PC-9 (cell line): ENCODE measurements at regions of chr14 and their contacts with region 1.

Region 1: DNA sequence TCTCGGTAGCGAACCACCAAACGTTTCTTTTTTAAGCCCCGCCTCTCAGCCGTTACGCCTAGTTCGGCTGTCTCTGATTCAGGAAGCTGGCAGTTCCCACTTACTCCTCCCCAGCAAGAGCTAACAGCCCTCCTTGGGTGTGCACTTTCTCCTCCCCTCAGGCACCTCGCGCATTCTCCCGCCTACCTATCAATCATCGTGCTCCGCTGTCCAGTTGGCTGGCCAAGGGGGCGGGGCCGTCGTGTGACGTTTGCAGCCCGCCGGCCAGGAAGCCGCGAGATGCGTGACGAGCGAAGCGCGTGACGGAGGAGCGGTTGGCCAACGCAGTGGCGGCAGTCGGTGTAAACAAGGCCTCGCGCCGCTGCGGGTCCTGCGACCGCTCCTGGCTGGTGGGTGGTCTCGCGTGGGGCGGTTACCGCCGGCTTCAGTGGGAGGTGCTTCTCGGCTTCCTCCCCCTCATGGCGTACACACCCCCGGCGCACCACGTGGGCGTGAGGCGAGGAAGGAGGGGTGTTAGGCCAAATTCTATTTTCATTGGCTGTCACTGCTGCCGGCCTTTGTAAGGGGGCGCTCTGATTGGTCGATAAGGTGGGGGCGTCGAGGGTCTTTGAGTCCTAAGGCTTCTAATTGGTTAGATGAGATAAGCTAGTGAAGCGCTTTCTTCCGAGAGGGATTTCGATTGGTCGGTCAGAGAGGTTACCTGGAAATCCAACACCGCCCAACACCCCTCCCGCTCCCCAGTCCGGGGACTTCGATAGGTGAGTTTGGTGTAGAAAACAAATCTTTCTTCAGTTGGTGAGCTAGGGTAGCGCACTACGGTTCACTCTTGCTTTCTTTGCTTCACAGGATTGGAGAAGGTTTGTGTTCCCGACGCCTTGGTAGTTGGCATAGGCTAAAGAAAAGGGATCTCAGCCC is at the starts of genes DCAF11 and NRL:
- DNase-seq: peak; percentile 95 to 97
- H3K4me3 ChIP-seq: peak within 1 kb of the TSS; percentile 69
- H3K27ac ChIP-seq: peak within 1 kb of the TSS; percentile 69
- H3K4me1 ChIP-seq: peaks cover 22% of the 10 kb centered on the region
- H3K27me3 ChIP-seq: no peaks in the 10 kb centered on the region
- CTCF ChIP-seq: no peak
- total RNA-seq, gene DCAF11: 52.7 and 87.6 TPM in 2 replicates
- total RNA-seq, gene NRL: 1.2 and 2.3 TPM in 2 replicates

Region 2: DNA sequence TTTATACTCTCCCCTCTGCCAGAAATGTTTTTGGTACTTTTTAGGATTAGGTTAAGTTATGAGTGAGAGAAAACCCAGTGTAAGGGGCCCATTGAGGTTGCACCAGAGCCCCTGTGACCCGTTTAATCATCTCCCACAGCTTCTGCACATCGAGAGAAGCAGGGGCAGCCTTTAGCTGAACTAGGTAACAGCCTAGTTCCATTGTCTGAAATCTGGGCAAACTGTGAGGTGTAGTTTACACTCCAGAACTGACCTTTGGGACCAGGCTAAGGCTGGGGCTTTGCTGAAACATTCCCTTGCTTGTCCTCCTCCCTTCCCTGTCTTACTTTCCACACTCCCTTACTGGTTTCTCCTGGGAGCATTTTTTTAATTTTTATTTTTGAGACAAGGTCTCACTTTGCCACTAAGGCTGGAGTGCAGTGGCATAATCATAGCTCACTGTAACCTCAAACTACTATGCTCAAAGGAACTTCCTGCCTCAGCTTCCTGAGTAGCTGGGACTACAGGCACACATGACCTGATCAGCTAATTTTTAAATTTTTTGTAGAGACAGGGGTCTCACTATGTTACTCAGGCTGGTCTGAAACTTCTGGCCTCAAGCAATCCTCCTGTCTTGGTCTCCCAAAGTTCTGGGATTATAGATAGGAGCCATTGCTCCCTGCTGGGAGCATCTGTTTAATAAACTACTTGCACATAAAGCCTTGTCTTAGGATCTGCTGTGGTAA is 504.5 kb before region 1 on chr14:
- CTCF ChIA-PET with region 1: interaction called, 14 read pairs
- POLR2A ChIA-PET with region 1: no interaction called
- intact Hi-C with region 1: no loop called
- DNase-seq: no peak
- H3K4me3 ChIP-seq: no peak overlapping the region
- H3K27ac ChIP-seq: no peak overlapping the region
- H3K4me1 ChIP-seq: peaks cover 19% of the 10 kb centered on the region
- H3K27me3 ChIP-seq: no peaks in the 10 kb centered on the region
- CTCF ChIP-seq: no peak

Region 3: GRCh38 chr14:24135834-24136542 is 21.2 kb after region 1 on chr14 and contains the start of gene PSME1:
- CTCF ChIA-PET with region 1: interaction called, 5 read pairs
- POLR2A ChIA-PET with region 1: interaction called, 13 read pairs
- intact Hi-C with region 1: no loop called
- DNase-seq: peak; percentile 51 to 91
- H3K4me3 ChIP-seq: peak within 1 kb of the TSS; percentile 87
- H3K27ac ChIP-seq: peak within 1 kb of the TSS; percentile 27; the same call in 1 of the 2 replicates
- H3K4me1 ChIP-seq: peaks cover 20% of the 10 kb centered on the region
- H3K27me3 ChIP-seq: no peaks in the 10 kb centered on the region
- CTCF ChIP-seq: no peak
- total RNA-seq, gene PSME1: 172 and 174 TPM in 2 replicates

Region 4: DNA sequence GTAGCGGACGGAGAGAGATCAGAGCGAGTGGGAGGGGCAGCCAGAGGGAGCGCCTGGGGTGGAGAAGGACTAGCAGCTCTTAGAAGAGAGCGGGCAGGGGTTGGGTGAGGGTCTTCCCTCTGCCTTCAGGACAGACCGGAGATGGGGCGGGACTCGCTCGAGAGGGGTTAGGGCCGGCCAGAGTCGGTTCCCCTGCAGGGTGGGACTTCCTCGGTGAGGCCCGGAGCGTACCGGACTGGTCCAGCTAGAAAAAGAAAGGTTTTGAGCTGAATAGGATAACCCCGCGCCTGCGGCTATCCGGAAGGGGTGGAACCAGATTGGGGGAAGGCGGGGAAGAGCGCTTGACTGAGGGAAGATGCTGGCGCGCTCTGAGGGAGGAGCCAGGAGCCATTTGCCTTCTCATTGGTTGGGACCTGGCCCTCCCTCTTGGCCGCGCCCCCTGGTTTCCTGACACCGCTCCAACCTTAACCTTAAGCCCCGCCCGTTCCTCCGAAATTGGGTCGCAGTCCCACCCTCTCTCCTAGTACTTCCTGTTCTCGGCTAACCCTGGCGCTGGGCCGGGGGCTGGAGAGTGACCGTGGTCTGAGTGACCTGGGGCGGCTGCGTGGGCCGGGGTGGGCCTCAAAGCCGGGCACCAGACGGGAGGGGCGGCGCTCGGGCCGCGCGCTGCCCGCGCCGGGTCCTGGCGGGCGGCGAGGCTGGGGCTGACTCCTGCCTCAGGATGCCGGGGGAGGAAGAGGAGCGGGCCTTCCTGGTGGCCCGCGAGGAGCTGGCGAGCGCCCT is 32.4 kb after region 1 on chr14 and contains the start of gene RNF31:
- CTCF ChIA-PET with region 1: interaction called, 4 read pairs
- POLR2A ChIA-PET with region 1: interaction called, 26 read pairs
- intact Hi-C with region 1: loop called (anchors 1 kb)
- DNase-seq: peak; percentile 90 to 94
- H3K4me3 ChIP-seq: peak within 1 kb of the TSS; percentile 63
- H3K27ac ChIP-seq: peak within 1 kb of the TSS; percentile 29; the same call in 1 of the 2 replicates
- H3K4me1 ChIP-seq: peaks cover 15% of the 10 kb centered on the region
- H3K27me3 ChIP-seq: no peaks in the 10 kb centered on the region
- CTCF ChIP-seq: no peak
- total RNA-seq, gene RNF31: 44.6 and 60.8 TPM in 2 replicates